H1 (cell line): ENCODE measurements at regions of chr6 and their contacts with region 1.

Region 1: GRCh38 chr6:43005844-43006243 is 7.9 kb downstream of the MEA1 start:
- DNase-seq: no peak
- H3K4me3 ChIP-seq: no peak overlapping the region
- H3K27ac ChIP-seq: no peak overlapping the region
- H3K4me1 ChIP-seq: no peaks in the 10 kb centered on the region
- H3K27me3 ChIP-seq: no peaks in the 10 kb centered on the region
- CTCF ChIP-seq: no peak
- EP300 ChIP-seq: no peak
- POLR2A ChIP-seq: no peak
- RAD21 ChIP-seq: no peak

Region 2: DNA sequence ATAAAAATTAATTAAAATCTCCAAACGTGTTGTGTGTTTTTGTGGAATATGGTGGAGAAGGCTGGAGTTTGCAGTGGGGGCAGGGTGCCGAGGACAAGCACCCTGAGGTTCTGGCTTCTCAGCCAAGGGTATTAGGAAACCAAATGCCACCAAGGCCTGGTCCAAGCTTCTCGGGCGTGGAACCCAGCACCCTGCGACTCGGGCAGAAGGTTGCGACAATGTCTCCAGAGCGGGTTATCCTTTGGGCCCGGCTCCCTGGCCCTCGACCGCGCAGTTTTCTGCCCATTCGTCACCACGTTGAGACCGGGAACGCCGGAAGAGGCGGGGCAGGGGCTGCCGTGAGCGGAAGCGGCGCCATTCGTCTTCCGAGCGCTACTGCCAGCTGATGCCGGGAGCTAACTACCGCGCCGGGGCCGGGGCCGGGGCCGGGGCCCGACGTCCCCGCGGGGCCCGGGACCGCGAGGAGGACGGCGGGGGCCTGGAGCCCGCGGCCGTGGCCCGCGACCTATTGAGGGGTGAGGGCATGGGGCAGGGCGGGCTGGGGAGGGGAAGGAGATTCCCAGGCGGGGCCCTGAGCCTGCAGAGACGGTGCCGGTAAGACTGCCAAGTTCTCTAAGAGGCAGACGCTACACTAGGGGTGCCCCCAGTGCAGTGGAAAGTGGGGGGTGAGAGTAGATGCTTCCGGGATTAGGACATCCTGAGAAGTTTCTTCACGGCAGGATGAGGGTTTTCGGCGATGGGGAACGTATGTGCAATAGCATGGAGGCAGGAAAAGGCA is 15.6 kb after region 1 on chr6 and contains the start of gene RRP36:
- CTCF ChIA-PET with region 1: interaction called, 33 read pairs
- POLR2A ChIA-PET with region 1: interaction called, 11 read pairs
- DNase-seq: peak in 1 of 2 experiments; percentile 84
- H3K4me3 ChIP-seq: peak within 1 kb of the TSS; percentile 93 to 99 (median 96)
- H3K27ac ChIP-seq: peak within 1 kb of the TSS; percentile 81
- H3K4me1 ChIP-seq: peaks cover 0 to 5% (median 1%) of the 10 kb centered on the region in 4 experiments; a peak in 3 of 7 replicates
- H3K27me3 ChIP-seq: no peaks in the 10 kb centered on the region
- CTCF ChIP-seq: no peak
- EP300 ChIP-seq: no peak
- POLR2A ChIP-seq: peak in 1 of 2 experiments; percentile 42; a peak in 1 of 3 replicates
- RAD21 ChIP-seq: 0 out of 4 replicates have a peak, but pooled peaks of 1 of the 2 experiments have one; percentile 1
- total RNA-seq, gene RRP36: 89.6 and 92.3 TPM in 2 replicates